Gastrocnemius medialis (tissue), 4 donors: ENCODE measurements at regions of chr7 and their contacts with region 1.

Region 1: DNA sequence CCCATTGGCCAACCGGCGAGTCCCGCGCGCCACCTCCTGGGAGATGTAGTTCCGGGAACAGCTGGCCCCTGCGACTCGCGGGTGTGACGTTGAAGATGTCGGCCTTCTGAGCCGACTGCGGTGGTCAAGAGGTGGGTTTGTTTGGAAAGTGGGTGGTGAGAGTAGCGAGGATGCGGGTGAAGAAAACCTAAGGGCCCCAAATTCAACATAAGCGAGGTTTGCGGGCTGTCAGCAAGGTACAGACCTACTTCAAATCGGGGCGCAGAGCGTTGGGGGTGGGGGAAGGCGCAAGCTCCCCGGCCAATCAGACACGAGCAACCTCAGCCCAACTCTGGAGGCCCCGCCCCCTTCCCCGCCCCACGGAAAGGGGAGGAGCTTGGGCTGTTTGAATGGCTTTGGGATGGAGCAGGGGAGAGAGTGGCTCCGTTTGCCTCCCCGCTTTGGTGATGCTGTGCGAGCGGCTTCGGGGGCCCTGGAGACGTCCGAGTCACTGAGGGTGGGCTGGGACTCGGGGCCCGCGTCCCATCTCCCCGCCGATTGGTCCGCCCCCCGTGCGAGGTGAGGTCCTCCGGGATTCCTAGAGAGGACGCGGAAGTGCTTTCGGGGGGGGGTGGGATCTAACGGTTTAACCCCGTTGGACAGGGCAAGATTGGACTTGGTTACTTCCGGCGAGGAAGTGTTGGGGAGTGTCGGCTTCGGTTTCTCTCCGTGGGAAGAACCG is at the start of gene ZKSCAN5:
- DNase-seq: peak; percentile 98
- ATAC-seq: peak; percentile 93
- H3K4me3 ChIP-seq: peak within 1 kb of the TSS; percentile 82 to 99 (median 94)
- H3K27ac ChIP-seq: peak within 1 kb of the TSS; percentile 97 to 99 (median 98)
- H3K4me1 ChIP-seq: peaks cover 29 to 30% of the 10 kb centered on the region in 2 donors
- H3K27me3 ChIP-seq: no peaks in the 10 kb centered on the region
- CTCF ChIP-seq: peak in 1 of 5 experiments; percentile 14
- POLR2A ChIP-seq: peak; percentile 53 to 83
- total RNA-seq, gene ZKSCAN5: 7.3 to 12.3 (median 10.5) TPM

Region 2: GRCh38 chr7:99408379-99409191 is 96.2 kb before region 1 on chr7 and contains the starts of genes BUD31 and PDAP1:
- in situ Hi-C with region 1: no loop called
- intact Hi-C with region 1: loop called (anchors 1 kb)
- DNase-seq: peak; percentile 88 to 93
- ATAC-seq: peak; percentile 92 to 93
- H3K4me3 ChIP-seq: peak within 1 kb of the TSS; percentile 96 to 100 (median 99)
- H3K27ac ChIP-seq: peak within 1 kb of the TSS; percentile 93 to 99 (median 96)
- H3K4me1 ChIP-seq: peaks cover 40 to 43% of the 10 kb centered on the region in 2 donors
- H3K27me3 ChIP-seq: no peaks in the 10 kb centered on the region
- CTCF ChIP-seq: peak in 4 of 5 experiments; percentile 3 to 34 (median 22)
- POLR2A ChIP-seq: peak; percentile 84 to 95
- total RNA-seq, gene BUD31: 23.3 to 46.8 (median 28.0) TPM
- total RNA-seq, gene PDAP1: 81.7 to 258 (median 198) TPM

Region 3: GRCh38 chr7:99472561-99473243 is 32.1 kb before region 1 on chr7 and contains the start of gene ZNF789:
- in situ Hi-C with region 1: no loop called
- intact Hi-C with region 1: loop called (anchors 1 kb)
- DNase-seq: peak; percentile 96 to 97
- ATAC-seq: peak; percentile 92 to 94
- H3K4me3 ChIP-seq: peak within 1 kb of the TSS; percentile 70 to 90 (median 88)
- H3K27ac ChIP-seq: peak within 1 kb of the TSS; percentile 80 to 95 (median 89)
- H3K4me1 ChIP-seq: peaks cover 9 to 14% of the 10 kb centered on the region in 2 donors
- H3K27me3 ChIP-seq: no peaks in the 10 kb centered on the region
- CTCF ChIP-seq: peak in 1 of 5 experiments; percentile 11
- POLR2A ChIP-seq: peak; percentile 33 to 55
- total RNA-seq, gene ZNF789: 1.2 to 2.8 (median 1.4) TPM

Region 4: GRCh38 chr7:99558306-99559174 is 53.8 kb after region 1 on chr7 and contains the start of gene ZNF655:
- in situ Hi-C with region 1: loop called in 2 of 4 experiments (anchors 5 to 10 kb)
- intact Hi-C with region 1: loop called (anchors 2 kb)
- DNase-seq: peak; percentile 91 to 92
- ATAC-seq: peak; percentile 86 to 92
- H3K4me3 ChIP-seq: peak within 1 kb of the TSS; percentile 82 to 94 (median 90)
- H3K27ac ChIP-seq: peak within 1 kb of the TSS; percentile 96 to 99 (median 98)
- H3K4me1 ChIP-seq: peaks cover 19 to 31% of the 10 kb centered on the region in 2 donors
- H3K27me3 ChIP-seq: no peaks in the 10 kb centered on the region
- CTCF ChIP-seq: no peak
- POLR2A ChIP-seq: peak; percentile 91 to 93
- total RNA-seq, gene ZNF655: 41.5 to 85.1 (median 56.5) TPM

Region 5: GRCh38 chr7:99707096-99707495 is 202.3 kb after region 1 on chr7:
- in situ Hi-C with region 1: no loop called
- intact Hi-C with region 1: no loop called
- DNase-seq: no peak
- ATAC-seq: no peak
- H3K4me3 ChIP-seq: no peak overlapping the region
- H3K27ac ChIP-seq: no peak overlapping the region
- H3K4me1 ChIP-seq: no peaks in the 10 kb centered on the region
- H3K27me3 ChIP-seq: no peaks in the 10 kb centered on the region
- CTCF ChIP-seq: no peak
- POLR2A ChIP-seq: no peak

Region 6: GRCh38 chr7:100081535-100082102 is 576.9 kb after region 1 on chr7 and contains the start of gene ZNF3:
- in situ Hi-C with region 1: no loop called
- intact Hi-C with region 1: loop called (anchors 2 kb)
- DNase-seq: peak; percentile 99
- ATAC-seq: peak; percentile 95 to 96
- H3K4me3 ChIP-seq: peak within 1 kb of the TSS; percentile 81 to 99 (median 87)
- H3K27ac ChIP-seq: peak within 1 kb of the TSS; percentile 86 to 96 (median 90)
- H3K4me1 ChIP-seq: peaks cover 22 to 24% of the 10 kb centered on the region in 2 donors
- H3K27me3 ChIP-seq: no peaks in the 10 kb centered on the region
- CTCF ChIP-seq: peak; percentile 93 to 98 (median 94)
- POLR2A ChIP-seq: peak; percentile 62 to 85
- total RNA-seq, gene ZNF3: 11.2 to 19.2 (median 16.1) TPM